Heart left ventricle (tissue), 16 donors: ENCODE measurements at regions of chr5 and their contacts with region 1.

Region 1: DNA sequence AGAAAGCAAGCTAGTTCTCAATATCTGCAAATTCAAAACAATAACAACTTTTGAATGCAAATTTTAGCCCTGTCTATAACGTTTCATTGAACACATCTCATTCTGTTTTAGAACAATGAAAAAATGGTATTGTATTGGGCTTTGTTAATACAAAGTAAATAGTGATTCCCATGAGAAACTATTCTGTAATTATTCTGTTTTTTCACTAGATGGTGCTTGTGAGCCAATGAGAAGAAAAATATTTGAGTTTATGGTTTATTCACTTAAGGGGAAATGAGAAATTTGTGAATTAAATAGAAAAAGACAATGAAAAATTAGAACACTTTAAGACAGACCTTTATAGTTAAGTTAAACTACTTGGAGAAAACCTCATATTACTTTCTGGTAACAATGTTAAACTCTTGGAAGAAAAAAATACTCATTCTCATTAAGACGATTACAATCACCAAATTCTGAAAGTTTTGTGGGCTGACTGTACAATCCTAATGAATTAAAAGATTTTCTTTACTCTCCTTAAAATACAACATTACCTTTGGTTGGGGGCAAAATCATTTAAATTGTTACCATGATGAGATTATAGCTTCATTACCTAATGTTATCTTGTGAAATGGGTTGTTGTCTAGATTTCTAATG is 127.0 kb downstream of the NNT start:
- DNase-seq: no peak
- ATAC-seq: no peak
- H3K4me3 ChIP-seq: no peak overlapping the region
- H3K27ac ChIP-seq: no peak overlapping the region
- H3K4me1 ChIP-seq: peaks cover 0 to 3% (median 0%) of the 10 kb centered on the region in 12 donors
- H3K27me3 ChIP-seq: no peaks in the 10 kb centered on the region
- CTCF ChIP-seq: peak; percentile 43 to 74 (median 58)
- POLR2A ChIP-seq: no peak

Region 2: DNA sequence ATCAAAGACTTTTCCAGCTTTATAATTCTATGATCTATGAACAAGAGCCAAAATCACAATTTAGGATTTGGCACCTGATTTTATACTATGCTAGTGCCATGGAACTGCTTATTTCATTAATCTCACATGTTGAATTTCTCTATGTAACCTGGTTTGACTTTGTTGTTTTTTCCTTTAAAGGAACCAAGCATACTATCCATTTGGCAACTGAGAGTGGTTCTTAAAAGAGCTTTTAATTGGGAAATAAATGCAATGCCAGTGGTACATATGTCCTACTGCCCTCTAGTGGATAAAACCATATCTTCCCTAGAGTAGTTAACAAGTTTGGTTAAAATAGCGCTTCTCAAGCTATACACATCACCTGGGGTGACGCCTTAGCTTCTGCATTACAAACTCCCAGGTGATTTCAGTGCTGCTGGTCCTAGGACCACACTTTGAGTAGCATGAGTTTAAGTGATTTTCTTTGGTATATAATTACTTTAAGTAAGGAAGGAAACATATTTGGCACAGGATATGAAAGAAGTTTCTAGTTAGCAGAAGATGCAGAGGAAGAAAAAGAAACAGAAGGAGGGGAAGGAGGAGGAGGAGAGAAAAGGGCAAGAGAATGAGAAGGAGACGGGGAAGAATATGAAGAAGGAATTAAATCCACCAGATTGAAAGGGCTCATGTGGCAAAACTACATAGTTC is 602.5 kb after region 1 on chr5:
- intact Hi-C with region 1: loop called in 9 of 10 experiments (anchors 2 to 5 kb)
- DNase-seq: no peak
- ATAC-seq: peak in 3 of 4 donors; percentile 47 to 55 (median 49)
- H3K4me3 ChIP-seq: no peak overlapping the region
- H3K27ac ChIP-seq: peak overlapping the region in 1 of 12 donors; percentile 22
- H3K4me1 ChIP-seq: no peaks in the 10 kb centered on the region
- H3K27me3 ChIP-seq: no peaks in the 10 kb centered on the region
- CTCF ChIP-seq: peak; percentile 46 to 70 (median 58)
- POLR2A ChIP-seq: no peak